Activated naive CD4-positive, alpha-beta T cell treated with anti-CD3 and anti-CD28 coated beads for 36 hours (primary cell): ENCODE measurements at regions of chr22 and their contacts with region 1.

Region 1: DNA sequence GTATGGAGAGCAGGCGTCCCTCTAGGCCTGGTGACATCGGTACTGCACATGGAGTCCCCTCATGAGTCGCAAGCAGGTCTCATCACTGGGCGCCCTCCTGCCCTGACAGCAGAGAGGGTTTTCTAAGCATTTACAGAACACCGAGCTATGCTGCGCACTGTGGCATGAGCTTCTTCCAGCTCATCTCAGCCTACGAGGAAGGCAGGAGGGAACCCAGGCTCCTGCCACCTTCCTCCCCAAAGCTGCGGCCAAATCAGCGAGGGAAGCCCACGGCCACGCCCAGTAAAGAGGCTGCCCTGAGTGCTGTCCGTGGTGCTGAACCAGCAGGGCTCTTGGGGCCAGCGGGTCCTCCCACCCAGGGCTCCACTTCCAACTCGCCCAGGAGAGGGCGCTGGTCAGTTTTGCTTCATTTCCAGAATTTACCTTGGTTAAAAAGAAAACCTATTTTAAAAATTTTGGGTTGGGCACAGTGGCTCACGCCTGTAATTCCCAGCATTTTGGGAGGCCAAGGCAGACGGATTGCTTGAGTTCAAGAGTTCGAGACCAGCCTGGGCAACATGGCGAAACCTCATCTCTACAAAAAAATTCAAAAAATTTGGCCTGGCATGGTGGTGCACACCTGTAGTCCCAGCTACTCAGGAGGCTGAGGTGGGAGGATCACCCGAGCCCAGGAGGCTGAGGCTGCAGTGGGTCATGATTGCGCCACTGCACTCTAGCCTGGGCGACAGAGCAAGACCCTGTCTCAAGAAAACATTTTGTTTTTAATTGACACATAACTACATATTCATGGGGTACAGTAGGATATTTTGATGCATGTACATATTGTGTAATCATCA is 34.2 kb downstream of the PHF21B start:
- DNase-seq: peak; percentile 91
- H3K4me3 Mint-ChIP-seq: no peak overlapping the region
- H3K27ac Mint-ChIP-seq: no peak overlapping the region
- H3K4me1 Mint-ChIP-seq: no peaks in the 10 kb centered on the region
- H3K27me3 Mint-ChIP-seq: peaks cover 6% of the 10 kb centered on the region

Region 2: DNA sequence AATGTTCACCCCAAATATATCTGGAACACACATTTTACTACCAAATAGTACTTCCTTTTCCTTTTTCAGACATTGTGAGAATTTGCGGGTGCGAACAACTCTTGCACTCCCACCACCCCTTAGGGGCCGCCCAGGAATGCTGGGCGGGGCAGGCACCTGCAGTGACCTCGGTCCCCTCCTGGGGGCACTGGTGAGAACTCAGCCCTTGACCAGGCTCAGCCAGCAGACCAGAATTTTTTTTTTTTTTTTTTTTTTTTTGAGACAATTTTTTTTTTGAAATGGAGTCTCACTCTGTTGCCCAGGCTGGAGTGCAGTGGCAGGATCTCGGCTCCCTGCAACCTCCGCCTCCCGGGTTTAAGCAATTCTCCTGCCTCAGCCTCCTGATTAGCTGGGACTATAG is 147.5 kb before region 1 on chr22:
- CTCF ChIA-PET with region 1: no interaction called
- intact Hi-C with region 1: loop called (anchors 10 kb)
- DNase-seq: peak; percentile 45
- H3K4me3 Mint-ChIP-seq: no peak overlapping the region
- H3K27ac Mint-ChIP-seq: no peak overlapping the region
- H3K4me1 Mint-ChIP-seq: no peaks in the 10 kb centered on the region
- H3K27me3 Mint-ChIP-seq: peaks cover 17% of the 10 kb centered on the region